CD8-positive, alpha-beta memory T cell (primary cell): ENCODE measurements at regions of chr9 and their contacts with region 1.

Region 1: DNA sequence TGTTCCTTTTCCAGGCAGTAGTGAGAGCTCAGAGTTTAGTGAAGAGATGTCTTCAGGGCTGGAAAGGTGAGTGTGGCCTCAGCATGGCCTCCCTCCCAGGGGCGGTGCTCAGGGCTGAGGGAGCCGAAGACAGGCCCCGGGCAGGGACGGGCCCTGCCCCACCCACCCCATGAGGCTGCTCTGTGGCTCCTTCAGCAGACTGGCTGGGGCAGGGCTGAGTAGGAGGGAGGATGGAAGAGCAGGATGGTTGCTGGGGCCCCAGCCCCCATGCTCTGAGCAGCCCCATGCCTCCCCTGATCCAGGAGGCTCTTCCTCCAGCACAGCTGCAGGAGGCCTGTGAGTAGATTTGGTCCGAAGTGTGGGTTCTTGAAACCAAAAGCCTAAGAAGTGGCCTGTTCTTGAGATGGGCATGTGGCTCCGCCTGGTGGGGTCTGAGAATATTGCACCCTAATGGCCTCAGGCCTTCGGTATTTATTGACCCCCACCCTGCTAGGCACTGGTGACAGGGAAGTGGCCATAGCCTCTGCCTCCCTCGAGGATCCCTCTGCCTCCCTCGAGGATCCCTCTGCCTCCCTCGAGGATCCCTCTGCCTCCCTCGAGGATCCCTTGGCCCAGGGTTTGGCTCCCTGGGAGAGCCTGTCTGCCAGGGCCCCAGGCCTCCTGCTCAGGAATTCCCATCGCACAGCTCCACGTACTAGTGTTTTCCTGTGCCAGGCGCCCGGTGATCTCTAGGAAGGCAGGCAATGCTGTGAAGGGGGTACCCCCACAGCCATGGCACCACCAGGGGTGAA is 65.4 kb upstream of the GARNL3 start:
- DNase-seq: peak; percentile 56 to 82 (median 65)
- H3K4me3 ChIP-seq: no peak overlapping the region
- H3K4me3 Mint-ChIP-seq: no peak overlapping the region
- H3K27ac ChIP-seq: no peak overlapping the region
- H3K27ac Mint-ChIP-seq: peak overlapping the region in 1 of 8 donors; percentile 56
- H3K4me1 ChIP-seq: peaks cover 11% of the 10 kb centered on the region
- H3K4me1 Mint-ChIP-seq: peaks cover 0 to 9% (median 7%) of the 10 kb centered on the region in 3 donors
- H3K27me3 ChIP-seq: no peaks in the 10 kb centered on the region
- H3K27me3 Mint-ChIP-seq: no peaks in the 10 kb centered on the region

Region 2: GRCh38 chr9:126939821-126940221 is 259.4 kb before region 1 on chr9:
- CTCF ChIA-PET with region 1: interaction called, 74 read pairs
- POLR2A ChIA-PET with region 1: no interaction called
- DNase-seq: no peak
- H3K4me3 ChIP-seq: no peak overlapping the region
- H3K4me3 Mint-ChIP-seq: peak overlapping the region in 1 of 7 donors; percentile 52
- H3K27ac ChIP-seq: no peak overlapping the region
- H3K27ac Mint-ChIP-seq: peak overlapping the region in 1 of 8 donors; percentile 12
- H3K4me1 ChIP-seq: no peaks in the 10 kb centered on the region
- H3K4me1 Mint-ChIP-seq: peaks cover 4 to 7% (median 6%) of the 10 kb centered on the region in 3 donors
- H3K27me3 ChIP-seq: no peaks in the 10 kb centered on the region
- H3K27me3 Mint-ChIP-seq: peaks cover 0 to 4% of the 10 kb centered on the region in 2 donors

Region 3: DNA sequence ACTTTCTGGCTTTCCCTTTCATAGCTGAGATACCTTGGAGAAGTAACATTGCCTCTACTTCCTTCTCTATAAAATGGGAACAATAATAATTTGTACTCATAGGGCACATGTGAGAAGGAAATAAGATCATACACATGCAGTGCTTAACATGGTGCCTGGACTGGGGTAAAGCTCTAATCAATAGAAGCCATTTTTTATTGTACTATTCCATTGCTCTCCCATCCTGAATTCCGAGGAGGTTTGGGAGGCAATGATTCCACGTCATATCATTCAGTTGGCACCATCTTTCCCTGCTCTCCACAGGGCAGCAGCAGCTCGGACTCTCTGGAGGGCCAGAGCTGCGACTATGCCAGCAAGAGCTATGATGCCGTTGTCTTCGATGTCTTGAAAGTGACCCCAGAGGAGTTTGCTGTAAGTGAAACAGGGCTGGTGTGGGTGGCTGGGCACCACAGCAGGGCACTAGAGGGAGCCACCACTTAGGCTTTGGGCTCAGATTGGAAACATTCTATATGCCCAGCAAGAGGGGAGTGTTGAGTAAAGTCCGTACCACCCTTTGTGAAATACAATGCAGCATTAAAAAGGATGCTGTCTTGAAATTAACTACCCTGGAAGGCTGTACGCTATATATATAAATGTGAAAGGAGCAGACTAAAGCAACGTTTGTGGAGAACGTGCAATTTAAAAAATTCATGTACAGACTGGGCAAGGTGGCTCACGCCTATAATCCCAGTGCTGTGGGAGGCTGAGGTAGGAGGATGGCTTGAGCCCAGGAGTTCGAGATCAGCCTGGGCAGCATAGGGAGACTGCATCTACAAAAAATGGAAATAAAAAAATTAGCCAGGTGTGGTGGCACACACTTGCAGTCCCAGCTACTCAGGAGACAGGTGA is 233.4 kb before region 1 on chr9:
- CTCF ChIA-PET with region 1: interaction called, 13 read pairs
- POLR2A ChIA-PET with region 1: no interaction called
- DNase-seq: peak in 4 of 5 donors; percentile 14 to 57 (median 38)
- H3K4me3 ChIP-seq: no peak overlapping the region
- H3K4me3 Mint-ChIP-seq: no peak overlapping the region
- H3K27ac ChIP-seq: no peak overlapping the region
- H3K27ac Mint-ChIP-seq: peak overlapping the region in 2 of 8 donors; percentile 47 to 51
- H3K4me1 ChIP-seq: no peaks in the 10 kb centered on the region
- H3K4me1 Mint-ChIP-seq: peaks cover 4 to 15% (median 8%) of the 10 kb centered on the region in 3 donors
- H3K27me3 ChIP-seq: no peaks in the 10 kb centered on the region
- H3K27me3 Mint-ChIP-seq: peaks cover 0 to 4% of the 10 kb centered on the region in 2 donors

Region 4: GRCh38 chr9:127263664-127264063 is 64.5 kb after region 1 on chr9:
- CTCF ChIA-PET with region 1: no interaction called
- POLR2A ChIA-PET with region 1: no interaction called
- DNase-seq: no peak
- H3K4me3 ChIP-seq: no peak overlapping the region
- H3K4me3 Mint-ChIP-seq: no peak overlapping the region
- H3K27ac ChIP-seq: no peak overlapping the region
- H3K27ac Mint-ChIP-seq: no peak overlapping the region
- H3K4me1 ChIP-seq: no peaks in the 10 kb centered on the region
- H3K4me1 Mint-ChIP-seq: no peaks in the 10 kb centered on the region
- H3K27me3 ChIP-seq: no peaks in the 10 kb centered on the region
- H3K27me3 Mint-ChIP-seq: peaks cover 0 to 6% of the 10 kb centered on the region in 2 donors

Region 5: DNA sequence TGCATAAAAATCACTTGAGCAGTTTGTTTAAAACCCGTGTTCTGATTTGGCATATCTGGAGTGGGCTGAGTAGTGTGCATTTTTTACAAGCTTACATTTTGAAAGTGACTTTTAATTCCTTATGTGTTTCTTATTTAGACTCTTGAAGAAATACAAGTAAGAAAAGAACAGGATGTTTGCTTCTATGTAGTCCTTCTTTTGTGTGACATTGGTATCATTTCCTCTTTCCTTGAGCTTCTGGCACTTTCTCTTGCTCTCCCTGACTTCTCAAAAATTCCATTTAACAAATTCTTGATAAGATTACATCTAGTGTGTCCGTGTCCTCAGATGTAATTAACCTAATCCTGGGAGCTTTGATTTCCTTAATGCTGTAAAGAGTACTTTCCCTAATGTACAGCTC is 77.9 kb after region 1 on chr9:
- CTCF ChIA-PET with region 1: no interaction called
- POLR2A ChIA-PET with region 1: no interaction called
- DNase-seq: no peak
- H3K4me3 ChIP-seq: no peak overlapping the region
- H3K4me3 Mint-ChIP-seq: no peak overlapping the region
- H3K27ac ChIP-seq: no peak overlapping the region
- H3K27ac Mint-ChIP-seq: no peak overlapping the region
- H3K4me1 ChIP-seq: no peaks in the 10 kb centered on the region
- H3K4me1 Mint-ChIP-seq: no peaks in the 10 kb centered on the region
- H3K27me3 ChIP-seq: no peaks in the 10 kb centered on the region
- H3K27me3 Mint-ChIP-seq: peaks cover 3 to 8% of the 10 kb centered on the region in 2 donors

Region 6: DNA sequence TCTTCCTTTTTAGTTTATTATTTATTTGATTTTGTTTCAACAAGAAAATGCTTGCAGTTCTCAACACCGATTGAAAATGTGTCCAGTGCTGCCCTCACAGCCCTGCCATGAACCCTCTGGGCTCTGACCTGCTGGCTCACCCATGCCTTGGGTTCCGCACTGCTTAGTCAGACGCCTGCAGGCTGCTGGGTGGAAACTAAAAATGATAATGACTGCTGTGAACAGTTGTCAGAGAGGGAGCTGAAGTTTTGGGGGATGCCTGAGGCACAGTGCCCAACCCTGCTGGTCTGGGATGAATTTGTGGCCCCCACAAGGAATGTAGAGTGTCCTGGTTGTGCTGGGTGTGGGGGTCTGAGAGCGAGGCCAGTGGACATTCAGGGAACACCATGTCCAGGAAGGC is 485.4 kb after region 1 on chr9:
- CTCF ChIA-PET with region 1: no interaction called
- POLR2A ChIA-PET with region 1: no interaction called
- DNase-seq: no peak
- H3K4me3 ChIP-seq: no peak overlapping the region
- H3K4me3 Mint-ChIP-seq: no peak overlapping the region
- H3K27ac ChIP-seq: no peak overlapping the region
- H3K27ac Mint-ChIP-seq: no peak overlapping the region
- H3K4me1 ChIP-seq: no peaks in the 10 kb centered on the region
- H3K4me1 Mint-ChIP-seq: no peaks in the 10 kb centered on the region
- H3K27me3 ChIP-seq: no peaks in the 10 kb centered on the region
- H3K27me3 Mint-ChIP-seq: peaks cover 0 to 2% of the 10 kb centered on the region in 2 donors